Natural killer cell (primary cell): ENCODE measurements at regions of chr9 and their contacts with region 1.

Region 1: GRCh38 chr9:89468281-89468960 is 29.5 kb downstream of the SEMA4D start:
- DNase-seq: peak in 1 of 2 donors; percentile 51
- ATAC-seq: peak in 2 of 3 donors; percentile 39 to 60
- H3K4me3 ChIP-seq: no peak overlapping the region
- H3K4me3 Mint-ChIP-seq: peak overlapping the region; percentile 79
- H3K27ac ChIP-seq: peak overlapping the region; percentile 34
- H3K27ac Mint-ChIP-seq: peak overlapping the region; percentile 80 to 94
- H3K4me1 ChIP-seq: peaks cover 64% of the 10 kb centered on the region
- H3K4me1 Mint-ChIP-seq: peaks cover 91 to 92% of the 10 kb centered on the region in 2 donors
- H3K27me3 ChIP-seq: no peaks in the 10 kb centered on the region
- H3K27me3 Mint-ChIP-seq: no peaks in the 10 kb centered on the region
- CTCF ChIP-seq: no peak

Region 2: DNA sequence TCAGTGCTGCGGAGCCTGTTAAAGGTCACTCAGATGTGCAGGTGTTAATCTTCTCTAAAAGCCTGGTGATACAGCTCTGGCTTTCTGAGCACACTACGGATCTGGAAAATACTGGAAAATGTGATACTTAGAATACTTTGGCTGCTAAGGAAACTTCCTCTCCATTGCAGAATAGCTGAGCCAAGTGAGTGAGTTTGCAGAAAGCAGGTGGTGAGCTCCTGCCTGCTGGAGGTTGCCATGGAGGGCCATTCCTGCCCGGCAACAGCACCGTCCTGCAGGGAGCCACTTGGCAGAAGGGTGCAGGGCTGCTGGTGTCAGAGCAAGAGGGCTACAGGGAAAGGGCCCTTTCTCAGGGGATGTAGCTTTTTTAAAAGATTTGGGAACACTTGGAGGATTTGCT is 109.4 kb before region 1 on chr9:
- intact Hi-C with region 1: no loop called
- DNase-seq: no peak
- ATAC-seq: no peak
- H3K4me3 ChIP-seq: no peak overlapping the region
- H3K4me3 Mint-ChIP-seq: no peak overlapping the region
- H3K27ac ChIP-seq: no peak overlapping the region
- H3K27ac Mint-ChIP-seq: peak overlapping the region; percentile 40 to 45
- H3K4me1 ChIP-seq: peaks cover 13% of the 10 kb centered on the region
- H3K4me1 Mint-ChIP-seq: peaks cover 21 to 37% of the 10 kb centered on the region in 2 donors
- H3K27me3 ChIP-seq: no peaks in the 10 kb centered on the region
- H3K27me3 Mint-ChIP-seq: no peaks in the 10 kb centered on the region
- CTCF ChIP-seq: no peak

Region 3: GRCh38 chr9:89483592-89484522 is 15.4 kb after region 1 on chr9:
- intact Hi-C with region 1: loop called (anchors 2 kb)
- DNase-seq: peak; percentile 42 to 84
- ATAC-seq: peak; percentile 75 to 84 (median 76)
- H3K4me3 ChIP-seq: peak overlapping the region; percentile 14
- H3K4me3 Mint-ChIP-seq: peak overlapping the region; percentile 32
- H3K27ac ChIP-seq: peak overlapping the region; percentile 22
- H3K27ac Mint-ChIP-seq: peak overlapping the region; percentile 63 to 78
- H3K4me1 ChIP-seq: peaks cover 69% of the 10 kb centered on the region
- H3K4me1 Mint-ChIP-seq: peaks cover 83 to 95% of the 10 kb centered on the region in 2 donors
- H3K27me3 ChIP-seq: no peaks in the 10 kb centered on the region
- H3K27me3 Mint-ChIP-seq: no peaks in the 10 kb centered on the region
- CTCF ChIP-seq: no peak